ENCODE measurements at regions of chr10 and their contacts with region 1.

Region 1: GRCh38 chr10:31759799-31760626 is 168.6 kb downstream of the ARHGAP12 start:
- DNase-seq: peak; percentile 96
- ATAC-seq: peak; percentile 93
- H3K4me3 ChIP-seq: peak overlapping the region; percentile 71 to 98 (median 94)
- H3K4me3 Mint-ChIP-seq: peak overlapping the region; percentile 92
- H3K27ac ChIP-seq: peak overlapping the region; percentile 85 to 86
- H3K27ac Mint-ChIP-seq: peak overlapping the region; percentile 97
- H3K4me1 ChIP-seq: peaks cover 5 to 14% of the 10 kb centered on the region in 2 donors
- H3K4me1 Mint-ChIP-seq: peaks cover 15% of the 10 kb centered on the region
- H3K27me3 ChIP-seq: no peaks in the 10 kb centered on the region
- H3K27me3 Mint-ChIP-seq: no peaks in the 10 kb centered on the region
- CTCF ChIP-seq: no peak

Region 2: GRCh38 chr10:30348378-30348776 is 1411.6 kb before region 1 on chr10:
- CTCF ChIA-PET with region 1: no interaction called
- POLR2A ChIA-PET with region 1: no interaction called
- intact Hi-C with region 1: loop called (anchors 5 kb)
- DNase-seq: no peak
- ATAC-seq: no peak
- H3K4me3 ChIP-seq: peak overlapping the region; percentile 60 to 98 (median 97)
- H3K4me3 Mint-ChIP-seq: peak overlapping the region; percentile 99
- H3K27ac ChIP-seq: peak overlapping the region; percentile 86 to 88
- H3K27ac Mint-ChIP-seq: peak overlapping the region; percentile 95
- H3K4me1 ChIP-seq: peaks cover 20 to 21% of the 10 kb centered on the region in 2 donors
- H3K4me1 Mint-ChIP-seq: peaks cover 49% of the 10 kb centered on the region
- H3K27me3 ChIP-seq: no peaks in the 10 kb centered on the region
- H3K27me3 Mint-ChIP-seq: no peaks in the 10 kb centered on the region
- CTCF ChIP-seq: no peak

Region 3: GRCh38 chr10:31133628-31134302 is 626.2 kb before region 1 on chr10:
- CTCF ChIA-PET with region 1: no interaction called
- POLR2A ChIA-PET with region 1: no interaction called
- intact Hi-C with region 1: loop called (anchors 10 kb)
- DNase-seq: peak; percentile 84
- ATAC-seq: peak; percentile 79
- H3K4me3 ChIP-seq: peak overlapping the region; percentile 24 to 91 (median 75)
- H3K4me3 Mint-ChIP-seq: peak overlapping the region; percentile 88
- H3K27ac ChIP-seq: peak overlapping the region; percentile 26 to 64
- H3K27ac Mint-ChIP-seq: peak overlapping the region; percentile 63
- H3K4me1 ChIP-seq: peaks cover 8 to 13% of the 10 kb centered on the region in 2 donors
- H3K4me1 Mint-ChIP-seq: peaks cover 24% of the 10 kb centered on the region
- H3K27me3 ChIP-seq: no peaks in the 10 kb centered on the region
- H3K27me3 Mint-ChIP-seq: no peaks in the 10 kb centered on the region
- CTCF ChIP-seq: no peak

Region 4: GRCh38 chr10:31197886-31198285 is 562.1 kb before region 1 on chr10:
- CTCF ChIA-PET with region 1: no interaction called
- POLR2A ChIA-PET with region 1: no interaction called
- intact Hi-C with region 1: no loop called
- DNase-seq: no peak
- ATAC-seq: no peak
- H3K4me3 ChIP-seq: no peak overlapping the region
- H3K4me3 Mint-ChIP-seq: no peak overlapping the region
- H3K27ac ChIP-seq: no peak overlapping the region
- H3K27ac Mint-ChIP-seq: no peak overlapping the region
- H3K4me1 ChIP-seq: no peaks in the 10 kb centered on the region
- H3K4me1 Mint-ChIP-seq: no peaks in the 10 kb centered on the region
- H3K27me3 ChIP-seq: no peaks in the 10 kb centered on the region
- H3K27me3 Mint-ChIP-seq: no peaks in the 10 kb centered on the region
- CTCF ChIP-seq: no peak

Region 5: DNA sequence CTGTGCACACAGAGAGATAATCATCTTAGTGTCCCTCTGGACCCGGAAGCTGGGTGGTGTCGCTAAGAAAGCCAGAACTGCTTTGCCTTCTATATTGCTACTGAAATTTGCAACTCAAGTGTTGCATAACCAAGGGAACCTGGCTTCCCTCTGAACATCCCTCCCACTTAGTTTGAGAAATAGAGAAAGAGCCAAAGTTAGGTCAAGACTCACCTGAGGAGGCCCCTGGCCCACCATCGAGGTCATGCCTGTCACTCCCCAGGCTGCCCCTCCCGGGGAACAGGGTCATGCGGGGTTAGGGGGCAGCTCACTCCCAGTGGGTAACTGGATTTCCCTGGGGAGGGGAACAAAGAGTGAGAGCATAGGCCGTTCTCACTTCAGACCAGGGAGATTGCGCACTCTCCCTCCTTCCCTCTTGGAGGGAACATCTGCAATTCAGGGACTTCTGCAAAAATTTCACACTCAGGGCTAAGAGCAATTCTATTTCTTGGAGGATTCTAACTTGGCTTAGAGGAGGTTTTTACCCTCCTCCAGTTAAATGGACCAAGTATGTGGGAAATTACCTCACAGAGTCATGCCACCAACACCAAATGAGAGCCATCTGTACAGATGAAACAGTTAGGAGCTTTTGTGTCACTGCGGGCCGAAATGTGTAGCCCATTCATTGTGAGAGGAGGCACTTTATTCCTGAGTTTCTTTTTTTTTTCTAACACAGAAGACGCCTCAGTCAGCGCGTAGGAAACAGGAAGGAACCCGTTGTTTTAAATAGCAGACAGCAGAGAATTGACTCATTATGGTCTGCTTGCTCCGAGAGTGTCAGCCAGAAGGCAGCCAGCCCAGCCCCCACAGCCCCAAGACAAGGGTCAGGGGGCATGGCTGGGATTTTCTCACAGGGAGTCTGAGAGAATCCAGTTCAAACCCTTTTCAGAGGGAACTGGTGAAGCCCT is 52.6 kb before region 1 on chr10:
- CTCF ChIA-PET with region 1: no interaction called
- POLR2A ChIA-PET with region 1: interaction called, 5 read pairs
- intact Hi-C with region 1: loop called (anchors 2 kb)
- DNase-seq: peak; percentile 47
- ATAC-seq: peak; percentile 81
- H3K4me3 ChIP-seq: peak overlapping the region in 3 of 5 experiments; percentile 16 to 57 (median 29)
- H3K4me3 Mint-ChIP-seq: peak overlapping the region; percentile 73
- H3K27ac ChIP-seq: peak overlapping the region; percentile 45 to 81
- H3K27ac Mint-ChIP-seq: peak overlapping the region; percentile 70
- H3K4me1 ChIP-seq: peaks cover 29 to 30% of the 10 kb centered on the region in 2 donors
- H3K4me1 Mint-ChIP-seq: peaks cover 40% of the 10 kb centered on the region
- H3K27me3 ChIP-seq: no peaks in the 10 kb centered on the region
- H3K27me3 Mint-ChIP-seq: no peaks in the 10 kb centered on the region
- CTCF ChIP-seq: no peak

Region 6: DNA sequence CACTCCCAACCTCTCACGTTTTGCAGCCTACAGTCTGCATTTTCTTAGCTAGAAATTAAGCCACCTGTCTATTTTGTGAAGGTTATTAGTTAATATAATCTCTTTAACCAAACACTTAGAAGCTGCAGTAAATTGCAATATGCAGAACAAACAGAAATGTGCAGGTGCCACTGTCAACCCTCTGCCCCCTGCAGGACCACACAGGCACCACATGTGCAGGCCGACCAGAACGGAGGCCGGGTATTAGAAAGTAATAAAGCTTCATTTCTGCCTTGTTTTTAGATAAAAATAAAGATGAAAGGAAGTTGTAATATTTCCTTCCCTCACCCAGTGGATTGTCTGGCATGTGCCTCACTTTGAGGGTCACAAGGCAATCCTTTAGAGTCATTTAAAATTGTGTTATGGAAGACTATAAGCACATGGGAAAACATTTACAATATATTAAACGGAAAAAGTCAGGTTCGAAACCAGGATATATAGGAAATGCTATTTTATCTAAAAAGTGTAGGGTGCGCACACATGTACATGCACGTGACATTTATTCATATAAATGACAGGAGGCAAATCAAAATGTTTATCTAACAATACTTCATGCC is 10.4 kb after region 1 on chr10:
- CTCF ChIA-PET with region 1: interaction called, 19 read pairs
- POLR2A ChIA-PET with region 1: no interaction called
- intact Hi-C with region 1: no loop called
- DNase-seq: peak; percentile 61
- ATAC-seq: peak; percentile 94
- H3K4me3 ChIP-seq: no peak overlapping the region
- H3K4me3 Mint-ChIP-seq: no peak overlapping the region
- H3K27ac ChIP-seq: no peak overlapping the region
- H3K27ac Mint-ChIP-seq: no peak overlapping the region
- H3K4me1 ChIP-seq: no peaks in the 10 kb centered on the region
- H3K4me1 Mint-ChIP-seq: no peaks in the 10 kb centered on the region
- H3K27me3 ChIP-seq: no peaks in the 10 kb centered on the region
- H3K27me3 Mint-ChIP-seq: no peaks in the 10 kb centered on the region
- CTCF ChIP-seq: peak; percentile 95